ENCODE measurements at regions of chr12 and their contacts with region 1.

Region 1: DNA sequence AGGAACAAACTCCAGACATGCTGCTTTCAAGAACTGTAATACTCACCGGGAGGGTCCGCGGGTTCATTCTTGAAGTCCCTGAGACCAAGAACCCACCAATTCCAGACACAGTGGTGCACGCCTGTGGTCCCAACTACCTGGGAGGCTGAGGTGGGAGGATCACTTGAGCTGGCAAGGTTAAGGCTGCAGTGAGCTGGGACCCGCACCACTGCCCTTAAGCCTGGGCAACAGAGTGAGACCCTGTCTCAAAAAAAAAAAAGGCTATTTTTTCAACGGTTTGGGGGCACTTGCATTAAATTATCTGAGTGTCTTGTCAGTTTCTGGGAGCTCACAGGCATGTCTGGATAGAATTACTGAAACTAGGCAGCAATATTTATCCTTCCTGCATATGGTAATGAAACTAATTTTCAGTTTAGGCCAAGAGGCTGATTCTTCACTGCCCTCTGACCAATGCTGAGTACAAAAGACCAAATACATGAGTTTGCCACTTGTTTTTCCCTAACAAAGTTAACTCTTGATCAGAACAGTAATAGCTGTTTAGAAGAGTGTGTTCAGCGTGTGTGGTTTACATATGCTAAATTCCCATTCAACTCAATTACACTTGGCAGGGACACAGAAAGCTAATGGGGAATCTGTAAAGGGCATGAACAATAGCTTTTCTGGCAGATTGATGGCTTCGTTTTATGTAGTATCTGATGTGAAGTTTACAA is 65.8 kb upstream of the RASSF3 start:
- DNase-seq: no peak
- H3K4me3 ChIP-seq: no peak overlapping the region
- H3K27ac ChIP-seq: no peak overlapping the region
- H3K4me1 ChIP-seq: no peaks in the 10 kb centered on the region
- CTCF ChIP-seq: no peak

Region 2: GRCh38 chr12:64412459-64412858 is 132.1 kb before region 1 on chr12:
- CTCF ChIA-PET with region 1: no interaction called
- POLR2A ChIA-PET with region 1: no interaction called
- intact Hi-C with region 1: no loop called
- DNase-seq: no peak
- H3K4me3 ChIP-seq: no peak overlapping the region
- H3K27ac ChIP-seq: no peak overlapping the region
- H3K4me1 ChIP-seq: peaks cover 3% of the 10 kb centered on the region
- CTCF ChIP-seq: no peak

Region 3: DNA sequence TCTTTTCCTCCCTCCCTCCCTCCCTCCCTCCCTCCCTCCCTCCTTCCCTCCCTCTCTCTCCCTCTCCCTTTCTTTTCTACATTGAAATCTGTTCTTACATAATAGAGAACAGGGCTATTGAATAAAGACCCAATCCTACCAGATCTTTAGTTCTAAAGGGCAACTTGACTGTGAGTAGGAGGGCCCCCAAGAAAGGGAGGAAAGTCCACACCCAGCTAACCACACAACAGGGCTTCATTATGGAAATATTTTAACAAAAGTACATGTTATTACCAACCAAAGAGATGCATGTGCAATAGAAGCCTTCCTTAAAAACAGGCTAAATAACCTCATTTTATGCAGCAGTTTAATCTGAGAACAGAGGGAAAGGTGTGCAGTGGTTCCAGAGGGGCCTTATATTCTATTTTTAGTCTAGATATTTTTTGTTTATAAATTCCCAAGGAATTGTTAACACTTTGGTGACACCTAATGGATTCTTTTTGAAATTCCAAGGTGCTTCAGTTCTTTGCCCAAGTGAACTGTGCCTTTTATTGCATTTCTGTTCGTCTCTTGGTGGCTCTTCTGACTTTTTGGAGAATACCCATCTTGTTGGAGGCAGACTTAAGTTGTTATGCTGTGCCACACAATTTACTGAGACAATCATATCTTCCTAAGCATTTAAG is 151.7 kb after region 1 on chr12:
- CTCF ChIA-PET with region 1: interaction called, 6 read pairs
- POLR2A ChIA-PET with region 1: interaction called, 6 read pairs
- intact Hi-C with region 1: loop called (anchors 1 kb)
- DNase-seq: peak; percentile 13
- H3K4me3 ChIP-seq: no peak overlapping the region
- H3K27ac ChIP-seq: no peak overlapping the region
- H3K4me1 ChIP-seq: peaks cover 6% of the 10 kb centered on the region
- CTCF ChIP-seq: peak; percentile 62

Region 4: DNA sequence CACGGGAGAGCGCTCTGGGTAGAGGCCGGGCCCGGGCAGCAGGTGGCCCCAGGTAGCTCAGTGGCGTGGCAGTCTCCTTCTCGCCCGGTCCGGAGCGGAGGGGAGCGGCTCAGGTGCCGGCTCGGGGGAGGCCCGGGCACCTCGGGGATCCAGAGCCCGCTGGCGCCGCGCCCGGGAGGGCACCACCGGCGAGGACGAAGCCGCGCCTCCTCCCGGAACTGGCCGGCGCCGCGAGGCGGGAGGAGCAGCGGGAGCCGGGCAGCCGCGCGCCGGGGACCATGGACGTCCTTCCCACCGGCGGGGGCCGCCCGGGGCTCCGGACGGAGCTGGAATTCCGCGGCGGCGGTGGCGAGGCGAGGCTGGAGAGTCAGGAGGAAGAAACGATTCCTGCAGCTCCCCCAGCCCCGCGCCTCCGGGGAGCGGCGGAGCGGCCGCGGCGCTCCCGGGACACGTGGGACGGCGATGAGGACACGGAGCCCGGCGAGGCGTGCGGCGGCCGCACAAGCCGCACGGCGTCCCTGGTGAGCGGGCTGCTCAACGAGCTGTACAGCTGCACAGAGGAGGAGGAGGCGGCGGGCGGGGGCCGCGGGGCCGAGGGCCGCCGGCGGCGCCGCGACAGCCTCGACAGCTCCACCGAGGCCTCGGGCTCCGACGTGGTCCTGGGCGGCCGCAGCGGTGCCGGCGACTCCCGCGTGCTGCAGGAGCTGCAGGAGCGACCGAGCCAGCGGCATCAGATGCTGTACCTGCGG is 236.2 kb after region 1 on chr12:
- CTCF ChIA-PET with region 1: no interaction called
- POLR2A ChIA-PET with region 1: no interaction called
- intact Hi-C with region 1: loop called (anchors 5 kb)
- DNase-seq: no peak
- H3K4me3 ChIP-seq: no peak overlapping the region
- H3K27ac ChIP-seq: no peak overlapping the region
- H3K4me1 ChIP-seq: peaks cover 7% of the 10 kb centered on the region
- CTCF ChIP-seq: no peak

Measured in OCI-LY7 (cell line).